ENCODE measurements at regions of chr10 and their contacts with region 1.

Region 1: DNA sequence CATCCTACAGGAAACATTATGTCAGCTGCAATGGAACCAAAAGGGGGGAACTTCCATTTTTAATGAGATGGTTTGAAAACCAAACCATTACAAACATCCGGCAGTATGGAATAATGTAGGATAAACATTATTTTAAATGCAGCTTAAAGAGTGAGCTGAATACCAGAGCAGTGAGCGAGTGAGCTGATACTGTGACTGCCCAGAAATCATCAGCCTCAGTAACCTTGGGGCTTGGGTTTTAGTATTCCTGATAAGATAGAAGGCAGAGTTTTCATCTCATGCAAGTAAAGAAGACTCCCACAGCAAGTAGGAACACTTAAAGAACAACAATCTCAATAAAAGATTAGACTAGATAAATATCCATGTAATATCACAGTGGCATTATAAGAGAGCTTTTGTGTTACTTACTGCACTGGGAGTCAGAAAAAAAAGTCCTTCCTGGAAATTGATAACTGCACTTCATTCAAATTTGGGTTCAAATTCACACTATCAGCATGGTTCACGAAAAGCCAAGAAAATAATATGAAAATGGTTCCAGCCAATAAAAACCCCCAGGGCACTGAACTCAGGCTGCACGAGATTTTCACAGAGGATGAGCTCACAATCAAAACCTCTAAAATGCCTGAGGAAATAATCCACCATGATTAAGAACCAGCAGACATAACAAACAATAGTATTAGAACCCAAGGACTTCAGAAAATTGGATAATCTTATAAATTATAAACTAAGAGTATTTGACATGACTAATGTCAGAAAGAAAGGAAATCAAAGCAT is 115.7 kb downstream of the MTPAP start:
- DNase-seq: peak; percentile 56
- ATAC-seq: peak; percentile 91
- H3K4me3 ChIP-seq: no peak overlapping the region
- H3K27ac ChIP-seq: no peak overlapping the region
- H3K4me1 ChIP-seq: peaks cover 4% of the 10 kb centered on the region
- H3K27me3 ChIP-seq: no peaks in the 10 kb centered on the region
- CTCF ChIP-seq: no peak
- POLR2A ChIP-seq: no peak
- RAD21 ChIP-seq: no peak; the same call in 1 of the 2 replicates

Region 2: GRCh38 chr10:30043476-30044270 is 189.7 kb before region 1 on chr10:
- CTCF ChIA-PET with region 1: no interaction called
- POLR2A ChIA-PET with region 1: interaction called, 20 read pairs
- dilution Hi-C with region 1: no loop called
- in situ Hi-C with region 1: no loop called
- intact Hi-C with region 1: no loop called
- DNase-seq: no peak
- ATAC-seq: no peak
- H3K4me3 ChIP-seq: no peak overlapping the region
- H3K27ac ChIP-seq: no peak overlapping the region
- H3K4me1 ChIP-seq: no peaks in the 10 kb centered on the region; the same call in 1 of the 2 replicates
- H3K27me3 ChIP-seq: no peaks in the 10 kb centered on the region
- CTCF ChIP-seq: no peak
- POLR2A ChIP-seq: no peak
- RAD21 ChIP-seq: no peak

Region 3: DNA sequence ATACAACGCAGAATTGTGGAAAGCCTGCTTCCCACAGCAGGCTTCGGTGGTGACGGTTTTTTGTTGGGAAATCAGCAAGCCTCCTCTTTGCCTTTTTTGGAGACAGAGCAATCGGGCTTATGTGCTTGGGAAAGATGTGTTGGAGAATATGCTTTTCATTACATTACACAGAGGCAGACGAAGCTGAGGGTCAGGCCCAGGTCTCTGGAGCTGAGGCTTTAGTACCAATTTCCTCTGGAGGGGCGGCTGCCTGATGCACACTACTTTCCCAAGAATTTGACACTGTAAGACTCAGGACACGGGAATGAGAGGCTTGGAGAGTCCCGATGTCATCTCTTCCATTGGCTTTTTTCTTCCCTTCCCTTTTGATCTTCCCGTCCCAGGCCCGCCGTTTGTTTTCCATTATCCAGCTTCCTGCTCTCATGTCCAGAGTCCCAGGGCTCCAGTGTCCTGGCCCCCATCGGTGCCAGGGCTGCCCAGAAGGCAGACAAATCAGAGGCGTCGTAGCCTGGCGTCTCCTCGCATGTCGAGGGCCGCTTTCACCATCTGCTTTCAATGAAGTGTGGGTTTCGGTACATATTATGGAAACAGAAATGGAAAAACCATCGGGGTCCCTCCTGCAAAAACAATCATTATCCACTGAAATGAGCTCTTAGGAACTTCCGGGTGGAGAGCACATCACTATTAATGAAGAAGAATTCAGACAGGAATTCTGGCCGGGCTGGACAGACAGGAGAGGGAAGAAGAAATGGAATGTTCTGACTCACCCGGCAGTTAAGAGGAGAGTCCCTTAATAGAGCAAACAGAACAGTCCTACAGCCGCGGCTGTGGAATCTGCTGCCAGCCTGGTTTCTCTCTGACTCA is 51.0 kb before region 1 on chr10:
- CTCF ChIA-PET with region 1: no interaction called
- POLR2A ChIA-PET with region 1: no interaction called
- dilution Hi-C with region 1: no loop called
- in situ Hi-C with region 1: no loop called
- intact Hi-C with region 1: loop called (anchors 1 kb)
- DNase-seq: peak; percentile 90
- ATAC-seq: peak; percentile 84
- H3K4me3 ChIP-seq: no peak overlapping the region
- H3K27ac ChIP-seq: peak overlapping the region; percentile 92
- H3K4me1 ChIP-seq: peaks cover 42% of the 10 kb centered on the region
- H3K27me3 ChIP-seq: no peaks in the 10 kb centered on the region
- CTCF ChIP-seq: no peak
- POLR2A ChIP-seq: no peak
- RAD21 ChIP-seq: peak; percentile 7; the same call in 1 of the 2 replicates